Stomach (tissue), 19 donors: ENCODE measurements at regions of chr5 and their contacts with region 1.

Region 1: DNA sequence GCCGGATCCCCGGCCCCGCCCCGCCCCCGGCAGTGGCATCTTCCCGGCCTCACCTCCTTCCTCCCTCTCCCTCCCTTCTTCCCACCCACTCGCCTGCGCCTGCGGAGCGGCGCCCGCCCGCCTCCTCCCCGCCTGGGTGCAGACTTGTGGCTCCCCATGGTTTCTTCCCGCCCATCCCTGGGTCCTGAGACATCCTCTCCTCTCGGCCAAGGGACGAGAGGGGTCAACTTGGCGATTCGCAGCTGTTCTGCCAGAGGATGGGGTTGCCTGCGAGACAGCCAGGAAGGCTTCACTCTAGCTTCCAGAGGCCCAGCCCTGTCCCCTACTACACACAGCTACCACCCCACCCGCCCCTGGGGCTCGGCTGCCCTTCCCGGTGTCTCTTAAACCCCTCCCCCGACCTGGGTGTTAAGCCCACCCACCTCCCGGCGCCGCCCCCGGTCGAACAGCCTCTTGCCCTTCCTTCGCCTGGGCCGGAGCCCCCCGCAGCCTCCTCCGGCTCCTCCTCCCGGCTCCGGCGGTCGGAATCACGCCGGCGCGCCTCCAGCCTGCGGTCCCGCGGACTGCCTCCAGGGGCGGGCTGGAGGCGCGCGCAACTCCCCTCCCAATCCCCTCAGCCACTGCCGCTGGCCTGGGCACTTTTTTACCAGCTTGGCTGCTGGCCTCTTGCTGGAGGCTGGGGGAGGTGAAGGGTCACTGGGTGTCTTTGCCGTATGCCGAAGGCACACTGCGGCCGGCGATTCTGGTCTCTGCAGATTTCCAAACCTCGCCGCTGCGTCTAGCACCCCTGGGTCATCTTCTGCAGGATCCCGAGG is 1.9 kb downstream of the JADE2 start:
- DNase-seq: peak; percentile 82 to 95
- H3K4me3 ChIP-seq: peak overlapping the region; percentile 82 to 91 (median 88)
- H3K27ac ChIP-seq: peak overlapping the region; percentile 94 to 99 (median 97)
- H3K4me1 ChIP-seq: peaks cover 53 to 71% (median 63%) of the 10 kb centered on the region in 4 donors
- H3K27me3 ChIP-seq: no peaks in the 10 kb centered on the region
- CTCF ChIP-seq: peak in 5 of 7 experiments; percentile 81 to 98 (median 96)
- EP300 ChIP-seq: no peak
- POLR2A ChIP-seq: peak in 1 of 4 donors; percentile 14

Region 2: DNA sequence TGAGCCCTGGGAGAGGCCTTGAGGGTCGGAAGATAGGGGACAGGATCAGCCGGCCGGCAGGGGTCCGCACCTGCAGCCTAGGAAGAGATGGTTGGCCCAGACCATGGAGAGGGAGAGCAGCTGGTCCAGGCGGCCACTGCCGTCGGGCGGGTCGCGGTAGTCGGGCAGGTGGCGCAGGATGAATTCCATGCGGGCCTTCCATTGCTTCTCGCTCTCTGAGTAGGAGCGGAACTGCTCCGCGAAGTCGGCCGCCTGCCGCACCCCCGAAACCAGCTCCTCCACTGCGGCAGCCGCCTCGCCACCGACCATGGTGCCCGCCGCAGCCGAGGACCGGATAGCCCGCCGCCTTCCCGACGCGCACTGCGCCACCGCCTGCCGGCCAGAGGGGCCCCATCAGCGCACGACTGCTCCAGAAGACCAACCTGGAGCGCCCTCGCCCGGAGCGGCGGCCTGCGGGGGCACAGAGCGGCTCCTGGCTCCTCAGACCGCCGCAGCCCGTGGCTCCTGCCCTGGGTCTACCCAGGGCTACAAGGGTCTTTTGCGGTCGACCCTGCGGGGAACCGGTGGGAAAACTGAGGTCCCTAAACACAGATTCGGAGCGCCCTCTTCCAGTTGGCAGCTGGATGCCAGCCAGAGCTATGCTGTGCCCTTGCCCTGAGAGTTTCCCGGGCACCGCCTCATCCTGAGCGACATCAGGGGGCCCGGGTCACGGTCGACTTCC is 115.6 kb before region 1 on chr5 and contains the start of gene CDKN2AIPNL:
- intact Hi-C with region 1: loop called (anchors 10 kb)
- DNase-seq: peak; percentile 94 to 97
- H3K4me3 ChIP-seq: peak within 1 kb of the TSS; percentile 65 to 94 (median 82)
- H3K27ac ChIP-seq: peak within 1 kb of the TSS; percentile 80 to 90 (median 85)
- H3K4me1 ChIP-seq: peaks cover 15 to 39% (median 29%) of the 10 kb centered on the region in 4 donors
- H3K27me3 ChIP-seq: no peaks in the 10 kb centered on the region
- CTCF ChIP-seq: peak in 5 of 7 experiments; percentile 61 to 87 (median 76)
- EP300 ChIP-seq: no peak
- POLR2A ChIP-seq: peak in 1 of 4 donors; percentile 30
- total RNA-seq, gene CDKN2AIPNL: 2.0 to 44.3 (median 22.2) TPM

Region 3: DNA sequence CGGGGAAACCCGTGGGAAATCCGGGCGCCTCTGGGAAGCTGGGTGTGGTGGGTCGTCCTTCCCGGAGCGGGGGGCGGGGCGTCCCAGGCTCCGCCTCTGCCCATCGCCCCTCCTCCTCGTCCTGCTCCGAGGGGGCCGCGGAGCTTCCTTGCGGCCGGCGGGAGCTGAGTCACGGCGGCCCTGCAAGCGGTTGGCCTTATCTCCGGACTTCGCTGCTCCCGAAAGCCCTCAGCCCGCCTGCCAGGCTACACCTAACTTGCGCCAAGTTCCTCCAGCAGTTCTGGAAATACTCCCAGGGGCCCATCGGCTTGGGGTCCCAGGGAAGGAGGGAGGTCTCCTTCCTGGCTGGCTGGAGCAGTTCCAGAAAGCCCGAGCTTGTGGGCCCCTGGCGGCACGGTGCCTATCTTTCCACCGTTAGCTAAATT is 61.5 kb before region 1 on chr5:
- intact Hi-C with region 1: loop called (anchors 10 kb)
- DNase-seq: peak; percentile 93 to 95
- H3K4me3 ChIP-seq: peak overlapping the region; percentile 36 to 54 (median 50)
- H3K27ac ChIP-seq: peak overlapping the region; percentile 93 to 99 (median 95)
- H3K4me1 ChIP-seq: peaks cover 25 to 43% (median 30%) of the 10 kb centered on the region in 4 donors
- H3K27me3 ChIP-seq: no peaks in the 10 kb centered on the region
- CTCF ChIP-seq: no peak
- EP300 ChIP-seq: no peak
- POLR2A ChIP-seq: no peak

Region 4: GRCh38 chr5:134577796-134578363 is 50.5 kb after region 1 on chr5:
- intact Hi-C with region 1: loop called (anchors 5 kb)
- DNase-seq: peak; percentile 85 to 91
- H3K4me3 ChIP-seq: no peak overlapping the region
- H3K27ac ChIP-seq: no peak overlapping the region
- H3K4me1 ChIP-seq: peaks cover 12 to 46% (median 33%) of the 10 kb centered on the region in 4 donors
- H3K27me3 ChIP-seq: no peaks in the 10 kb centered on the region
- CTCF ChIP-seq: peak in 5 of 7 experiments; percentile 78 to 85 (median 83)
- EP300 ChIP-seq: no peak
- POLR2A ChIP-seq: no peak